Activated CD4-positive, alpha-beta T cell treated with anti-CD3 and anti-CD28 coated beads for 36 hours (primary cell): ENCODE measurements at regions of chr20 and their contacts with region 1.

Region 1: GRCh38 chr20:43590392-43591323 is at the start of gene IFT52:
- DNase-seq: peak; percentile 94
- ATAC-seq: peak; percentile 99
- H3K4me3 Mint-ChIP-seq: peak within 1 kb of the TSS; percentile 86
- H3K27ac Mint-ChIP-seq: peak within 1 kb of the TSS; percentile 96
- H3K4me1 Mint-ChIP-seq: peaks cover 12% of the 10 kb centered on the region
- H3K27me3 Mint-ChIP-seq: no peaks in the 10 kb centered on the region
- total RNA-seq, gene IFT52: 14.0 to 14.1 TPM

Region 2: GRCh38 chr20:41693136-41693979 is 1897.3 kb before region 1 on chr20:
- CTCF ChIA-PET with region 1: no interaction called
- POLR2A ChIA-PET with region 1: no interaction called
- intact Hi-C with region 1: loop called in 1 of 2 experiments (anchors 10 kb)
- DNase-seq: peak; percentile 88
- ATAC-seq: peak; percentile 90
- H3K4me3 Mint-ChIP-seq: peak overlapping the region; percentile 90
- H3K27ac Mint-ChIP-seq: peak overlapping the region; percentile 94
- H3K4me1 Mint-ChIP-seq: peaks cover 13% of the 10 kb centered on the region
- H3K27me3 Mint-ChIP-seq: peaks cover 2% of the 10 kb centered on the region

Region 3: GRCh38 chr20:43456809-43457639 is 133.6 kb before region 1 on chr20:
- CTCF ChIA-PET with region 1: interaction called, 3 read pairs
- POLR2A ChIA-PET with region 1: interaction called, 7 read pairs
- intact Hi-C with region 1: loop called (anchors 1 kb)
- DNase-seq: peak; percentile 92
- ATAC-seq: peak; percentile 86
- H3K4me3 Mint-ChIP-seq: peak overlapping the region; percentile 91
- H3K27ac Mint-ChIP-seq: peak overlapping the region; percentile 99
- H3K4me1 Mint-ChIP-seq: peaks cover 30% of the 10 kb centered on the region
- H3K27me3 Mint-ChIP-seq: peaks cover 2% of the 10 kb centered on the region

Region 4: DNA sequence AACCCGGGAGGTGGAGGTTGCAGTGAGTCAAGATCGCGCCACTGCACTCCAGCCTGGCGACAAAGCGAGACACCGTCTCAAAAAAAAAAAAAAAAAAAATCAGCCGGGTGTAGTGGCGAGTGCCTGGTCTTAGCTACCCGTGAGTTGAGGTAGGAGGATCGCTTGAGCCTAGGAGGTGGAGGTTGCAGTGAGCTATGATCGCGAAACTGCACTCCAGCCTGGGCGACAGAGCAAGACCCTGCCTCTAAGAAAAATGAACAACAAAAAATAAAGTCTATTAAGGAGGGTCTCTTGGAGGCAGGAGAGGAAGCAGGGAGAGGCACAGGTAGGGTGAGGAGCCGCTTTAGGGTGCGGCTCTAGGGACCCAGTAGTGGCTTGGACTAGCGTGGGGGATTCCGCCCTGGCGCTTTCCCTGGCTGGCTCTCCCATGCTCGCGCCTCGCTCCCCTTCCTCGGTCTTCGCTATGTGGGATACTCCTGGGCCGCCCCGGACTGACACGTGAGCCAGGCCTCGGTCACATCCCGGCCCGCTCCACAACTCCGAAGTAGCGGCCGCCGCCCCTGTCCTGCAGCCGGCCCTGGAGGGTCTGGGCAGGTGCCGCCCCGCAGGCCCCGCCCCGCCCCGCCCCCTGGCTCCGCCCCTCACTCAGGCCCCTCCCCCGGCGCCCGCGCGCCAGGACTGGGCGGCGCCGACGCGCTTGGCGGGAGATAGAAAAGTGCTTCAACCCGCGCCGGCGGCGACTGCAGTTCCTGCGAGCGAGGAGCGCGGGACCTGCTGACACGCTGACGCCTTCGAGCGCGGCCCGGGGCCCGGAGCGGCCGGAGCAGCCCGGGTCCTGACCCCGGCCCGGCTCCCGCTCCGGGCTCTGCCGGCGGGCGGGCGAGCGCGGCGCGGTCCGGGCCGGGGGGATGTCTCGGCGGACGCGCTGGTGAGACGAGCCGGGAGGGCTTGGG is 76.0 kb after region 1 on chr20 and contains the start of gene MYBL2:
- CTCF ChIA-PET with region 1: interaction called, 3 read pairs
- POLR2A ChIA-PET with region 1: no interaction called
- intact Hi-C with region 1: loop called (anchors 1 to 2 kb)
- DNase-seq: peak; percentile 86
- ATAC-seq: peak; percentile 95
- H3K4me3 Mint-ChIP-seq: peak within 1 kb of the TSS; percentile 83
- H3K27ac Mint-ChIP-seq: peak within 1 kb of the TSS; percentile 58
- H3K4me1 Mint-ChIP-seq: peaks cover 2% of the 10 kb centered on the region
- H3K27me3 Mint-ChIP-seq: peaks cover 11% of the 10 kb centered on the region
- total RNA-seq, gene MYBL2: 99.8 to 113 TPM